ENCODE measurements at regions of chr2 and their contacts with region 1.

Region 1: GRCh38 chr2:149597668-149598326 is 10.2 kb upstream of the MMADHC start:
- DNase-seq: peak in 1 of 2 donors; percentile 58
- H3K4me3 ChIP-seq: no peak overlapping the region
- CTCF ChIP-seq: peak in 1 of 3 donors; percentile 52
- POLR2A ChIP-seq: no peak

Region 2: DNA sequence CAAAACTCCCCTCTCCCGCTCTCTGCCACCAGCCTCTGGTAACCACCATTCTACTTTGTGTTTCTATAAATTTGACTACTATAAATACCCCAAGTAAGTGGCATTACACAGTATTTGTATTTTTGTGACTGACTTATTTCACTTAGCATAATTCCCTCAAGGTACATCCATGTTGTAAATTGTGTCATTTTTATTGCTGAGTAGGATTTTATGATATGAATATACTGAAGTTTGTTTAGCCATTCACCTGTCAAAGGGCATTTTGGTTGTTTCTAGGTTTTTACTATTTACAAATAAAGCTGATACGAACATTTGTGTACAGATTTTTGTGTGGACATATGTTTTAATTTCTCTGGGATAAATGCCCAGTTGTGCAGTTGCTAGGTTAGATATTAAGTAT is 163.8 kb after region 1 on chr2:
- intact Hi-C with region 1: no loop called
- DNase-seq: no peak
- H3K4me3 ChIP-seq: no peak overlapping the region
- CTCF ChIP-seq: no peak
- POLR2A ChIP-seq: no peak

Region 3: GRCh38 chr2:150487537-150488429 is 890.0 kb after region 1 on chr2 and contains the start of gene RND3:
- intact Hi-C with region 1: loop called (anchors 10 kb)
- DNase-seq: peak; percentile 99
- H3K4me3 ChIP-seq: peak within 1 kb of the TSS; percentile 81
- CTCF ChIP-seq: peak in 2 of 3 donors; percentile 40 to 60
- POLR2A ChIP-seq: peak in 1 of 2 donors; percentile 83
- total RNA-seq, gene RND3: 35.5 to 66.8 (median 47.6) TPM

Region 4: GRCh38 chr2:151280271-151280670 is 1682.5 kb after region 1 on chr2:
- intact Hi-C with region 1: no loop called
- DNase-seq: no peak
- H3K4me3 ChIP-seq: no peak overlapping the region
- CTCF ChIP-seq: no peak
- POLR2A ChIP-seq: no peak

Measured in lower leg skin (tissue), 4 donors.